CD8-positive, alpha-beta T cell (primary cell): ENCODE measurements at regions of chr1 and their contacts with region 1.

Region 1: GRCh38 chr1:110963691-110964399 is at the start of gene LRIF1:
- DNase-seq: peak; percentile 98 to 100 (median 100)
- ATAC-seq: peak; percentile 96
- H3K4me3 ChIP-seq: peak within 1 kb of the TSS; percentile 77 to 88
- H3K4me3 Mint-ChIP-seq: peak within 1 kb of the TSS; percentile 84
- H3K27ac ChIP-seq: peak within 1 kb of the TSS; percentile 98 to 99
- H3K27ac Mint-ChIP-seq: peak within 1 kb of the TSS; percentile 99
- H3K4me1 ChIP-seq: peaks cover 21% of the 10 kb centered on the region
- H3K4me1 Mint-ChIP-seq: peaks cover 33% of the 10 kb centered on the region
- H3K27me3 ChIP-seq: peaks cover 0 to 2% of the 10 kb centered on the region in 2 experiments
- H3K27me3 Mint-ChIP-seq: peaks cover 10% of the 10 kb centered on the region
- CTCF ChIP-seq: peak; percentile 59
- total RNA-seq, gene LRIF1: 1.8 to 1.9 TPM

Region 2: DNA sequence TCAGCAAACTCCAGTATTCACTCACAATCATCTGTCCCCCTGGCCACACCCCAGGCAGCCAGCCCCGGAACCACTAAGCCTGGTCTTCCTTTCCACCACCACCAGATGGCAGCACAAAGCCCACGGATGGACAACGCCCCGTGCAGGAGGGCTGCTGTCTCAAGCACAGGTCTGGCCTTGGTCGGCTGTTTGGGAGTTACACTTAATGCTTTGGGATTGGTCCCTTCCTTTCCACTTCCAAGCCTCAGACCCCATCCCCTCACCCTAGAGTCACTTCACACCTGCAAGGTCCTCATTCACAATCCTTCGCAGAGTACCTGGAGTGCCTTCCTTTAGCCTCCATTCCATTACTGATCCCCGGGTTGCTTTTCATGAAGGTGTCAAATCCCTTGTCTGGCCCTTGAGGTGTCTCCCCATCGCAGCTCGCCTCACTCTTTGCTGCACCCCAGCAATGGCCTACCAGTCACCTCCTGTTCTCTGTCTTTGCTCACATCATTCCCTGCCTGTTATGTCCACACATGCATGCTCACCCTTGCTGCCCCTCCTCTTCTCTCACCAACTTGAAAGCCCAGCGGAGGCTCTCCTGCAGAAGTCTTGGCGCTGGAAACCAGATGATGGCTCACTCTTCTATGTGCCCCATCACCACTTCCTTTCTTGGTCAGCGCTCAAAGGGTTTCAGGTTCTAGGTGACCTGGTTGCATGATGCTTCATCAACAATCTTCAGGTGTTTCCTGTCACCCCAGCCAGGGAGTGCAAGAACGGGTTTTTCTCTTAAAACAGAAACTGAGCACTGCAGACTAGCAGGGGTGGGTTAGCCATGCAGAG is 332.8 kb before region 1 on chr1:
- CTCF ChIA-PET with region 1: no interaction called
- POLR2A ChIA-PET with region 1: no interaction called
- intact Hi-C with region 1: loop called (anchors 1 to 5 kb)
- DNase-seq: peak; percentile 66 to 94 (median 85)
- ATAC-seq: peak; percentile 72
- H3K4me3 ChIP-seq: peak overlapping the region; percentile 27
- H3K4me3 Mint-ChIP-seq: no peak overlapping the region
- H3K27ac ChIP-seq: peak overlapping the region; percentile 28 to 55
- H3K27ac Mint-ChIP-seq: no peak overlapping the region
- H3K4me1 ChIP-seq: peaks cover 55% of the 10 kb centered on the region
- H3K4me1 Mint-ChIP-seq: peaks cover 46% of the 10 kb centered on the region
- H3K27me3 ChIP-seq: no peaks in the 10 kb centered on the region
- H3K27me3 Mint-ChIP-seq: no peaks in the 10 kb centered on the region
- CTCF ChIP-seq: peak; percentile 70

Region 3: DNA sequence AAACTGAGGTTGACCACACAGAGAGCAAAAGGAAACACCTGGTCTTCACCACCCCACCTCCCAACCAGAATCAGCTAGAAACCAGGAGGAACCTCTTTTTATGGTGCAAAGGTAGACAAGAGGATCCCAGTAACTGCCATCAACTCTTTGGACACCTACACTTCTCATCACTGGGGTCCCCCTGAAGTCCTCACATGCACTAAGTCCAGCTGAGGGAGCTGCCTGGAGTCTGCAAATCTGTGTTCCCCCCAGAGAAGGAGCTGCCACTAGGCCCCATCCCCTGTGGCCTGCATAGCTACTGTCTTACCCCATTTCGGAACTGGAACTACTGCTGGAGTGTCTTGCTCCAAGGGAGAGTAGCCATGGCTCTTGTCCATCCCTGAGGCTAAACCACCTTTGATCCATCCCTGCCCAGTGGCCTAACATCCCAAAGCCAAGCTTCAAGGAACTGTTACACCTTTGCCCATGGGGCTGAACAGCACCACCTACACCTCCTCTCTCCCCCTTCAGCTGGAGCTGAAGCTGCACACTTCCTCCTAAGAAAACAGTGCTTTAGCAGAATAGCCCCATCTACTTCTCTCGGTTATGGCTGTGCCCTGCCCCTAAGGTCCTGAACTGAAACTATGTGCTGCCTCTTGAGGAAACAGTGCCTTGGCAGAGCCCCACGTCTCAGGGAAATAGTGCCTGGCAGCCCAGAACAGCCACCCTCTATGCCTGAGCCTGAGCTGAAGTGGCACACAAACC is 176.3 kb before region 1 on chr1:
- CTCF ChIA-PET with region 1: interaction called, 8 read pairs
- POLR2A ChIA-PET with region 1: interaction called, 10 read pairs
- intact Hi-C with region 1: loop called (anchors 1 to 5 kb)
- DNase-seq: peak in 8 of 9 experiments; percentile 16 to 79 (median 50)
- ATAC-seq: peak; percentile 69
- H3K4me3 ChIP-seq: peak overlapping the region; percentile 23 to 25
- H3K4me3 Mint-ChIP-seq: peak overlapping the region; percentile 71
- H3K27ac ChIP-seq: peak overlapping the region; percentile 22 to 64
- H3K27ac Mint-ChIP-seq: peak overlapping the region; percentile 82
- H3K4me1 ChIP-seq: peaks cover 58% of the 10 kb centered on the region
- H3K4me1 Mint-ChIP-seq: peaks cover 68% of the 10 kb centered on the region
- H3K27me3 ChIP-seq: no peaks in the 10 kb centered on the region
- H3K27me3 Mint-ChIP-seq: no peaks in the 10 kb centered on the region
- CTCF ChIP-seq: no peak

Region 4: DNA sequence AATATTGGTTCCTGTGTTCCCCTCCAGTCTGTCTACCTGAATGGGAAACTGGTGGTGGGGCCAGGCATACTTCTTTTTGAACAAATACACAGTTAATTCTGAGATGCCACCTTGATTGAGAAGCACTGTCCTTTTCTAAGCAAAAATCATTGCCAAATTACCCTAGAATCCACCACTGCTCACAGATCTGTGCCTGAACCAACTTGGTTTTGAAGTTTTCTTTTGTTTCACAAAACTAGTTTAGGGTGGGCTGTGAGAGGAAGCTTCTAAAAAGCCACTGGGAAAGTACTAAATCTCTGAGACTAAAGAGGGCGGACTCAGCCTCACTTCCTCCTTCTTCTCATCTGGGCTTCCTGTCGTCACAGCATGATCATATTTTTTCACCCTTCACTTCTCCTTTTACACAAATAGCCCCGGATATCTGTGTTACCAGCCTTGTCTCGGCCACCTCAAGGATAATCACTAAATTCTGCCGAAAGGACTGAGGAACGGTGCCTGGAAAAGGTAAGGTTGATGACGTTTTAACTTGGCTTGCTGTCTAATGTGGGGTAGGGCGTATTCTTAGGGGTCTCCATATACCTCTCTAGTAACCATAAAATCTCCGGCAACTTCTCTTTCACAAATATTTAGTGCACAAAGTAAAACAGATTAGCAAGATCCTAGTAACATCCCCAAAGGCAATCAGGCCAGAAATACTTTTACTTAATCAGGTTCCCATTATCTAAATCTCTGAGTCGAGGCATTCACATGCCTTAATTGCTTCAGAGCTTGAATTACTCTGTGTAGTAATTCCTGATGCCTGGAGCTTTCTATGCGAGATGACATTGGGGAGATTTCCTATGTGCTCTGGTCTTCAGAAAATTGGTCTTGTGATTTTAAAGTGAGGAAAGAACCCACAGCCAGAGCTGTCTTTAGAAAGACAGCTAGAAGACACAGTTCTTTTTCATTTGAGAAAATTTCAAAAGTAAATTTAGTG is 90.8 kb before region 1 on chr1 and contains the start of gene CD53:
- CTCF ChIA-PET with region 1: interaction called, 3 read pairs
- POLR2A ChIA-PET with region 1: interaction called, 34 read pairs
- intact Hi-C with region 1: loop called (anchors 1 to 2 kb)
- DNase-seq: peak in 8 of 9 experiments; percentile 39 to 92 (median 66)
- ATAC-seq: peak; percentile 70
- H3K4me3 ChIP-seq: peak within 1 kb of the TSS; percentile 83 to 86
- H3K4me3 Mint-ChIP-seq: peak within 1 kb of the TSS; percentile 96
- H3K27ac ChIP-seq: peak within 1 kb of the TSS; percentile 95 to 96
- H3K27ac Mint-ChIP-seq: peak within 1 kb of the TSS; percentile 98
- H3K4me1 ChIP-seq: peaks cover 49% of the 10 kb centered on the region
- H3K4me1 Mint-ChIP-seq: peaks cover 63% of the 10 kb centered on the region
- H3K27me3 ChIP-seq: no peaks in the 10 kb centered on the region
- H3K27me3 Mint-ChIP-seq: no peaks in the 10 kb centered on the region
- CTCF ChIP-seq: no peak
- total RNA-seq, gene CD53: 205 to 213 TPM

Region 5: GRCh38 chr1:110903853-110904484 is 59.9 kb before region 1 on chr1:
- CTCF ChIA-PET with region 1: no interaction called
- POLR2A ChIA-PET with region 1: interaction called, 3 read pairs
- intact Hi-C with region 1: loop called (anchors 5 kb)
- DNase-seq: no peak
- ATAC-seq: peak; percentile 8
- H3K4me3 ChIP-seq: no peak overlapping the region
- H3K4me3 Mint-ChIP-seq: no peak overlapping the region
- H3K27ac ChIP-seq: peak overlapping the region in 1 of 2 experiments; percentile 6
- H3K27ac Mint-ChIP-seq: peak overlapping the region; percentile 65
- H3K4me1 ChIP-seq: no peaks in the 10 kb centered on the region
- H3K4me1 Mint-ChIP-seq: peaks cover 33% of the 10 kb centered on the region
- H3K27me3 ChIP-seq: no peaks in the 10 kb centered on the region
- H3K27me3 Mint-ChIP-seq: no peaks in the 10 kb centered on the region
- CTCF ChIP-seq: no peak

Region 6: GRCh38 chr1:110976089-110976488 is 12.2 kb after region 1 on chr1:
- CTCF ChIA-PET with region 1: no interaction called
- POLR2A ChIA-PET with region 1: no interaction called
- intact Hi-C with region 1: no loop called
- DNase-seq: no peak
- ATAC-seq: no peak
- H3K4me3 ChIP-seq: no peak overlapping the region
- H3K4me3 Mint-ChIP-seq: no peak overlapping the region
- H3K27ac ChIP-seq: no peak overlapping the region
- H3K27ac Mint-ChIP-seq: no peak overlapping the region
- H3K4me1 ChIP-seq: no peaks in the 10 kb centered on the region
- H3K4me1 Mint-ChIP-seq: no peaks in the 10 kb centered on the region
- H3K27me3 ChIP-seq: peaks cover 0 to 6% of the 10 kb centered on the region in 2 experiments
- H3K27me3 Mint-ChIP-seq: peaks cover 27% of the 10 kb centered on the region
- CTCF ChIP-seq: no peak

Region 7: GRCh38 chr1:110986407-110986891 is 22.6 kb after region 1 on chr1:
- CTCF ChIA-PET with region 1: interaction called, 11 read pairs
- POLR2A ChIA-PET with region 1: interaction called, 4 read pairs
- intact Hi-C with region 1: no loop called
- DNase-seq: peak in 1 of 9 experiments; percentile 11
- ATAC-seq: no peak
- H3K4me3 ChIP-seq: no peak overlapping the region
- H3K4me3 Mint-ChIP-seq: no peak overlapping the region
- H3K27ac ChIP-seq: no peak overlapping the region
- H3K27ac Mint-ChIP-seq: no peak overlapping the region
- H3K4me1 ChIP-seq: peaks cover 7% of the 10 kb centered on the region
- H3K4me1 Mint-ChIP-seq: peaks cover 18% of the 10 kb centered on the region
- H3K27me3 ChIP-seq: no peaks in the 10 kb centered on the region
- H3K27me3 Mint-ChIP-seq: peaks cover 2% of the 10 kb centered on the region
- CTCF ChIP-seq: no peak

Region 8: GRCh38 chr1:111099289-111099688 is 135.4 kb after region 1 on chr1:
- CTCF ChIA-PET with region 1: no interaction called
- POLR2A ChIA-PET with region 1: no interaction called
- intact Hi-C with region 1: no loop called
- DNase-seq: no peak
- ATAC-seq: no peak
- H3K4me3 ChIP-seq: no peak overlapping the region
- H3K4me3 Mint-ChIP-seq: no peak overlapping the region
- H3K27ac ChIP-seq: no peak overlapping the region
- H3K27ac Mint-ChIP-seq: no peak overlapping the region
- H3K4me1 ChIP-seq: no peaks in the 10 kb centered on the region
- H3K4me1 Mint-ChIP-seq: no peaks in the 10 kb centered on the region
- H3K27me3 ChIP-seq: no peaks in the 10 kb centered on the region
- H3K27me3 Mint-ChIP-seq: no peaks in the 10 kb centered on the region
- CTCF ChIP-seq: no peak

Region 9: GRCh38 chr1:111346089-111346885 is 382.4 kb after region 1 on chr1:
- CTCF ChIA-PET with region 1: no interaction called
- POLR2A ChIA-PET with region 1: no interaction called
- intact Hi-C with region 1: loop called in 1 of 2 experiments (anchors 10 kb)
- DNase-seq: peak; percentile 75 to 96 (median 87)
- ATAC-seq: peak; percentile 86
- H3K4me3 ChIP-seq: peak overlapping the region; percentile 67 to 68
- H3K4me3 Mint-ChIP-seq: peak overlapping the region; percentile 89
- H3K27ac ChIP-seq: peak overlapping the region; percentile 51 to 63
- H3K27ac Mint-ChIP-seq: peak overlapping the region; percentile 90
- H3K4me1 ChIP-seq: no peaks in the 10 kb centered on the region
- H3K4me1 Mint-ChIP-seq: peaks cover 23% of the 10 kb centered on the region
- H3K27me3 ChIP-seq: no peaks in the 10 kb centered on the region
- H3K27me3 Mint-ChIP-seq: no peaks in the 10 kb centered on the region
- CTCF ChIP-seq: no peak